Aorta (tissue), 5 donors: ENCODE measurements at regions of chr2 and their contacts with region 1.

Region 1: DNA sequence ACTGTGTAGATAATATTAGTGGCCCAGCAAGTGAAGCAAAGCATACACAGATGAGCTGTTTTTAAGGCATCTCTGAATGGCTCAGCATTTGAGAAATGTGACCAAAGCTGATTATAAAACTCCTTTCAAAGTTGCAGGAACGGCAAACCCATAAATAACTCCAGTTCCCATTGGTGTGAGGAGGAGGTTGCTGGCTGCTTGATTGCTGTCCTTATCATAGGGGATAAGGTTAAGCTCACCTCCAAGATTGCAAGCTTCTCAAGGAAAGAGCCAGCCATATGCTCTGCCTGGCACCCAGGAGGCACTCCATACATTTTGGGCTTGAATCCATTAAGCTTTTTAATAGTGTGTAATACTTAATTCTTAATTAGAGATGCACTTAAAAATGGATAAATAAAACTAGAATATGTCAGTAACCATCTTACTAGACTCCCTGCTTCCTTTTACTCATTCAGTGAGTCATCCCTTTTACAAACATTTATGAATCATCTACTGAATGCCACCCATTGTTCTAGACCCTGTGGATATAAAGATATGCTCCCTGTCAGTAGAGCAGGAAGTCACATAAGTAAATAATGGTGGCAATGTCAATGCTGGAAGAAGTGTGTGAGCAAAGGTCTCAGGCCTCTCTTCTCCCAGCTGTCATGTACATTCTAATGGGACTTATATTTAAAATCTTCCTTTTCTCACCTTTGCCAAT is 99.3 kb downstream of the SPATS2L start:
- DNase-seq: no peak
- ATAC-seq: peak; percentile 42
- H3K4me3 ChIP-seq: no peak overlapping the region
- H3K27ac ChIP-seq: peak overlapping the region; percentile 6 to 40
- H3K4me1 ChIP-seq: peaks cover 2 to 13% of the 10 kb centered on the region in 2 donors
- H3K27me3 ChIP-seq: no peaks in the 10 kb centered on the region

Region 2: GRCh38 chr2:200329798-200330197 is 76.0 kb before region 1 on chr2:
- intact Hi-C with region 1: no loop called
- DNase-seq: no peak
- ATAC-seq: no peak
- H3K4me3 ChIP-seq: no peak overlapping the region
- H3K27ac ChIP-seq: peak overlapping the region in 1 of 2 donors; percentile 5
- H3K4me1 ChIP-seq: peaks cover 3% of the 10 kb centered on the region in 2 donors
- H3K27me3 ChIP-seq: no peaks in the 10 kb centered on the region

Region 3: GRCh38 chr2:200352636-200353035 is 53.1 kb before region 1 on chr2:
- intact Hi-C with region 1: loop called in 1 of 2 experiments (anchors 10 kb)
- DNase-seq: no peak
- ATAC-seq: no peak
- H3K4me3 ChIP-seq: no peak overlapping the region
- H3K27ac ChIP-seq: peak overlapping the region; percentile 12 to 93
- H3K4me1 ChIP-seq: peaks cover 5 to 10% of the 10 kb centered on the region in 2 donors
- H3K27me3 ChIP-seq: no peaks in the 10 kb centered on the region

Region 4: GRCh38 chr2:200378652-200379290 is 27.0 kb before region 1 on chr2:
- intact Hi-C with region 1: loop called in 1 of 2 experiments (anchors 2 kb)
- DNase-seq: no peak
- ATAC-seq: peak; percentile 57
- H3K4me3 ChIP-seq: no peak overlapping the region
- H3K27ac ChIP-seq: peak overlapping the region; percentile 8 to 60
- H3K4me1 ChIP-seq: peaks cover 3 to 20% of the 10 kb centered on the region in 2 donors
- H3K27me3 ChIP-seq: no peaks in the 10 kb centered on the region

Region 5: GRCh38 chr2:200442471-200442870 is 36.7 kb after region 1 on chr2:
- intact Hi-C with region 1: no loop called
- DNase-seq: no peak
- ATAC-seq: peak; percentile 63
- H3K4me3 ChIP-seq: no peak overlapping the region
- H3K27ac ChIP-seq: no peak overlapping the region
- H3K4me1 ChIP-seq: peaks cover 0 to 3% of the 10 kb centered on the region in 2 donors
- H3K27me3 ChIP-seq: no peaks in the 10 kb centered on the region